Naive thymus-derived CD4-positive, alpha-beta T cell (primary cell): ENCODE measurements at regions of chr9 and their contacts with region 1.

Region 1: GRCh38 chr9:36893911-36894310 is 140.2 kb downstream of the PAX5 start:
- DNase-seq: no peak
- ATAC-seq: no peak
- H3K4me3 ChIP-seq: no peak overlapping the region
- H3K4me3 Mint-ChIP-seq: no peak overlapping the region
- H3K27ac ChIP-seq: no peak overlapping the region
- H3K27ac Mint-ChIP-seq: no peak overlapping the region
- H3K4me1 ChIP-seq: no peaks in the 10 kb centered on the region
- H3K4me1 Mint-ChIP-seq: peaks cover 0 to under 1% (median 0%) of the 10 kb centered on the region in 7 donors
- H3K27me3 ChIP-seq: no peaks in the 10 kb centered on the region
- H3K27me3 Mint-ChIP-seq: peaks cover 0 to 18% (median 4%) of the 10 kb centered on the region in 5 donors

Region 2: GRCh38 chr9:36847781-36848673 is 45.9 kb before region 1 on chr9:
- CTCF ChIA-PET with region 1: no interaction called
- POLR2A ChIA-PET with region 1: no interaction called
- intact Hi-C with region 1: no loop called
- DNase-seq: no peak
- ATAC-seq: peak; percentile 16
- H3K4me3 ChIP-seq: no peak overlapping the region
- H3K4me3 Mint-ChIP-seq: no peak overlapping the region
- H3K27ac ChIP-seq: no peak overlapping the region
- H3K27ac Mint-ChIP-seq: no peak overlapping the region
- H3K4me1 ChIP-seq: no peaks in the 10 kb centered on the region
- H3K4me1 Mint-ChIP-seq: no peaks in the 10 kb centered on the region
- H3K27me3 ChIP-seq: no peaks in the 10 kb centered on the region
- H3K27me3 Mint-ChIP-seq: no peaks in the 10 kb centered on the region

Region 3: GRCh38 chr9:36905101-36906066 is 11.5 kb after region 1 on chr9:
- CTCF ChIA-PET with region 1: no interaction called
- POLR2A ChIA-PET with region 1: no interaction called
- intact Hi-C with region 1: no loop called
- DNase-seq: no peak
- ATAC-seq: no peak
- H3K4me3 ChIP-seq: no peak overlapping the region
- H3K4me3 Mint-ChIP-seq: no peak overlapping the region
- H3K27ac ChIP-seq: no peak overlapping the region
- H3K27ac Mint-ChIP-seq: no peak overlapping the region
- H3K4me1 ChIP-seq: no peaks in the 10 kb centered on the region
- H3K4me1 Mint-ChIP-seq: peaks cover 0 to 7% (median 0%) of the 10 kb centered on the region in 7 donors
- H3K27me3 ChIP-seq: peaks cover 0 to 3% of the 10 kb centered on the region in 2 donors
- H3K27me3 Mint-ChIP-seq: peaks cover 15 to 33% (median 30%) of the 10 kb centered on the region in 5 donors

Region 4: GRCh38 chr9:36924071-36924470 is 30.2 kb after region 1 on chr9:
- CTCF ChIA-PET with region 1: no interaction called
- POLR2A ChIA-PET with region 1: no interaction called
- intact Hi-C with region 1: loop called in 1 of 2 experiments (anchors 1 kb)
- DNase-seq: no peak
- ATAC-seq: no peak
- H3K4me3 ChIP-seq: no peak overlapping the region
- H3K4me3 Mint-ChIP-seq: peak overlapping the region in 1 of 10 donors; percentile 20
- H3K27ac ChIP-seq: no peak overlapping the region
- H3K27ac Mint-ChIP-seq: peak overlapping the region in 1 of 9 donors; percentile 39
- H3K4me1 ChIP-seq: no peaks in the 10 kb centered on the region
- H3K4me1 Mint-ChIP-seq: peaks cover 0 to 41% (median 0%) of the 10 kb centered on the region in 7 donors
- H3K27me3 ChIP-seq: no peaks in the 10 kb centered on the region
- H3K27me3 Mint-ChIP-seq: peaks cover 0 to 26% (median 14%) of the 10 kb centered on the region in 5 donors

Region 5: DNA sequence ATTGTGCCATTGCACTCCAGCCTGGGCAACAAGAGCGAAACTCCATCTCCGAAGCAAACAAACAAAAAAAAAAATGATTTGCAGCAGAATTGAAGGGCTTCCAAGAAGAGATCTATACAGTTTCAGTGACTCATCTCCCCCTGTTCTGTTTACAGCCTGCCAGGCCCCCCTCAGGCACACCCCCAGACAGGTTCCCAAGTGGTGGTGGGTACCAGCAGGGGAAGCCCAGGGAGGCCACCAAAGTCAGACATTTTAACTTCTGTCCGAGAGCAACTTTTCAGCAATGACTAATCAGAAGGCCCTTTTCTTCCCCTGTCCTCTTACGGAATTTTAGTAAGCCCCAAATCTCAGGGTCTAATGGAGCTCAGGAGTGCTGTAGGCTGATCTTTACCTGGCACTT is 41.4 kb after region 1 on chr9:
- CTCF ChIA-PET with region 1: no interaction called
- POLR2A ChIA-PET with region 1: no interaction called
- intact Hi-C with region 1: no loop called
- DNase-seq: peak in 1 of 9 donors; percentile 20
- ATAC-seq: no peak
- H3K4me3 ChIP-seq: no peak overlapping the region
- H3K4me3 Mint-ChIP-seq: no peak overlapping the region
- H3K27ac ChIP-seq: no peak overlapping the region
- H3K27ac Mint-ChIP-seq: no peak overlapping the region
- H3K4me1 ChIP-seq: no peaks in the 10 kb centered on the region
- H3K4me1 Mint-ChIP-seq: peaks cover 0 to 7% (median 0%) of the 10 kb centered on the region in 7 donors
- H3K27me3 ChIP-seq: no peaks in the 10 kb centered on the region
- H3K27me3 Mint-ChIP-seq: peaks cover 5 to 16% (median 12%) of the 10 kb centered on the region in 5 donors